Body of pancreas (tissue), 4 donors: ENCODE measurements at regions of chr7 and their contacts with region 1.

Region 1: GRCh38 chr7:106367018-106367420 is 82.2 kb upstream of the NAMPT start:
- DNase-seq: no peak
- ATAC-seq: no peak
- H3K4me3 ChIP-seq: no peak overlapping the region
- H3K27ac ChIP-seq: no peak overlapping the region
- H3K4me1 ChIP-seq: no peaks in the 10 kb centered on the region
- H3K27me3 ChIP-seq: no peaks in the 10 kb centered on the region
- CTCF ChIP-seq: peak in 1 of 7 experiments; percentile 4
- POLR2A ChIP-seq: no peak

Region 2: DNA sequence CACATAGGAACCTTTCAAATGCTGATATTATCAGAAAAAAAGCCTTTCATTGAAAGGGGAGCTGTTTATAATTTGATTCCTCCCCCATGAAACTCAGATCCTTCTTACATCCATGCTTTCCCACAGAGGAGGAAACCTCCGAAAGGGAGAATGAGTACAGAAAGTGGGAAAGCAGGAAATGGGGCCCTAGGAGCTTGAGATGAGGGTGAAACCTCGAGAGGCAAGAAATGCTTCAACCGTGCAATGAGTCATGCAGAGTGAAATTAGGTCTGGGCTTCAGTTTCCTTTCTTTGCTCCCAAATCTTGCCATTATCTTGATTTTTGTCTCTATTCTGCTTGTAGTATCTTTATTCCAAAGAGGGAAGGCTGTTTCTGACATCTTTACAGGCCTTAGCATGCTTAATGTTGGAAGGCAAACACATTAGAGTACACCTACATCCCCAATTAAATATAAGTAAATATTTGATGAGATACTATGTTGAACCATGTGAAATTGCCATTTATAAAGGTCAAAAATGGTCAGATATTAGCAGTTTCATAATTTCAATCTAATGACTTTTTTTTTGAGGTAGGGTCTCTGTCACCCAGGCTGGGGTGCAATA is 161.3 kb before region 1 on chr7:
- intact Hi-C with region 1: no loop called
- DNase-seq: no peak
- ATAC-seq: no peak
- H3K4me3 ChIP-seq: no peak overlapping the region
- H3K27ac ChIP-seq: no peak overlapping the region
- H3K4me1 ChIP-seq: peaks cover 6% of the 10 kb centered on the region
- H3K27me3 ChIP-seq: no peaks in the 10 kb centered on the region
- CTCF ChIP-seq: no peak
- POLR2A ChIP-seq: no peak

Region 3: DNA sequence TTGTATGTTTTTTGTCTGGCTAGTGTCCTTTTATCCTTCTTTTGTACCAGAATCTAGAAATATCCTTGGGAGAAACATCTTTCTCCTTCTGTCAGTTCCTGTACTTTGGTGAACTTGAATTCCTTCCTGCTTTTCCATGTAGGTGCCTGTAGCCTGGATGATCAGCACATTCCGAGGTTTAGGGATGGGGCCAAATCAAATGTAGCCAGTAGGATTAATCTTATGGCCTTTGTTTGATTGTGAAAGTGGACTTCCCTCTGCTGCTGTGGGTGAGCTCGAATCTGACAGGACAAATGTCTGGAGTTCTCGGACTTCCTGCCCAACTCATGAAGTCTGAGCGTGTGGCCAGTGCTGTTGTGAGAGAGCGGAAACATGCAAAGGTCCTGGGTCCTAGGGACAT is 49.0 kb before region 1 on chr7:
- intact Hi-C with region 1: loop called (anchors 5 kb)
- DNase-seq: no peak
- ATAC-seq: no peak
- H3K4me3 ChIP-seq: no peak overlapping the region
- H3K27ac ChIP-seq: no peak overlapping the region
- H3K4me1 ChIP-seq: no peaks in the 10 kb centered on the region
- H3K27me3 ChIP-seq: no peaks in the 10 kb centered on the region
- CTCF ChIP-seq: no peak
- POLR2A ChIP-seq: no peak

Region 4: GRCh38 chr7:106421181-106421762 is 54.3 kb after region 1 on chr7:
- intact Hi-C with region 1: no loop called
- DNase-seq: peak; percentile 36 to 79 (median 56)
- ATAC-seq: peak; percentile 25
- H3K4me3 ChIP-seq: no peak overlapping the region
- H3K27ac ChIP-seq: peak overlapping the region; percentile 27 to 87 (median 70)
- H3K4me1 ChIP-seq: peaks cover 76% of the 10 kb centered on the region
- H3K27me3 ChIP-seq: no peaks in the 10 kb centered on the region
- CTCF ChIP-seq: no peak
- POLR2A ChIP-seq: peak in 1 of 3 donors; percentile 28

Region 5: DNA sequence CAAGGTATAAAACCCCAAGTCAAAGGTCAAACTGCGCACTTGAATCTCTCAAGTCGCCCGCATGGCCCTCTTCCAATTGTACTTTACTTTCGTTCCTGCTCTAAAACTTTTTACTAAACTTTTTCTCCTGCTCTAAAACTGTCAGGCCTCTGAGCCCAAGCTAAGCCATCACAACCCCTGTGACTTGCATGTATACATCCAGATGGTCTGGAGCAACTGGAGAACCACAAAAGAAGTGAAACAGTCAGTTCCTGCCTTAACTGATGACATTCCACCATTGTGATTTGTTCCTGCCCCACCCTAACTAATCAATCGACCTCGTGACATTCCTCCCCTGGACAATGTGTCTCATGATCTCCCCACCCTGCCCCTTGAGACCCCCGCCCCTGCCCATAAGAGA is 462.5 kb after region 1 on chr7:
- intact Hi-C with region 1: no loop called
- DNase-seq: no peak
- ATAC-seq: no peak
- H3K4me3 ChIP-seq: no peak overlapping the region
- H3K27ac ChIP-seq: no peak overlapping the region
- H3K4me1 ChIP-seq: no peaks in the 10 kb centered on the region
- H3K27me3 ChIP-seq: no peaks in the 10 kb centered on the region
- CTCF ChIP-seq: no peak
- POLR2A ChIP-seq: no peak

Region 6: DNA sequence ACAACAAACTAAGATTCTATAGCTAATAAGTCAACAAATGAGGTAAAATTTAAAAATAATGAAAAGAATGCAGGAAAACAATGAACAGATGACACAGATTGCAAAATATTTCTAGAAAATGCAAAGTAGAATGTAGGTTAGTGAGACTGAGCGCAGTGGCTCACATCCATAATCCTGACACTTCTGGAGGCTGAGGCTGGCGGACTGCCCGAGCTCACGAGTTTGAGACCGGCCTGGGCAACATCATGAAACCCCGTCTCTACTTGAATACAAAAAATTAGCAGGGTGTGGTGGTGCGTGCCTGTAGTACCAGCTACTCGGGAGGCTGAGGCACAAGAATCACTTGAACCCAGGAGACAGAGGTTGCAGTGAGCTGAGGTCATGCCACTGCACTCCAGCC is 1056.8 kb after region 1 on chr7:
- intact Hi-C with region 1: no loop called
- DNase-seq: no peak
- ATAC-seq: no peak
- H3K4me3 ChIP-seq: no peak overlapping the region
- H3K27ac ChIP-seq: no peak overlapping the region
- H3K4me1 ChIP-seq: peaks cover 6% of the 10 kb centered on the region
- H3K27me3 ChIP-seq: no peaks in the 10 kb centered on the region
- CTCF ChIP-seq: no peak
- POLR2A ChIP-seq: no peak